GM12878 (cell line): ENCODE measurements at regions of chr11 and their contacts with region 1.

Region 1: GRCh38 chr11:83115551-83115950 is 41.4 kb upstream of the PCF11 start:
- DNase-seq: no peak
- ATAC-seq: no peak
- H3K4me3 ChIP-seq: 0 out of 2 replicates have a peak overlapping the region, but pooled peaks have one; percentile 8
- H3K27ac ChIP-seq: no peak overlapping the region
- H3K4me1 ChIP-seq: peaks cover 12% of the 10 kb centered on the region
- H3K27me3 ChIP-seq: no peaks in the 10 kb centered on the region
- CTCF ChIP-seq: no peak
- EP300 ChIP-seq: no peak
- POLR2A ChIP-seq: no peak
- RAD21 ChIP-seq: no peak

Region 2: GRCh38 chr11:82775736-82776346 is 339.7 kb before region 1 on chr11:
- CTCF ChIA-PET with region 1: no interaction called
- POLR2A ChIA-PET with region 1: no interaction called
- RAD21 ChIA-PET with region 1: no interaction called
- SMC1A ChIA-PET with region 1: no interaction called
- in situ Hi-C with region 1: no loop called
- intact Hi-C with region 1: no loop called
- DNase-seq: no peak
- ATAC-seq: peak; percentile 100
- H3K4me3 ChIP-seq: no peak overlapping the region
- H3K27ac ChIP-seq: no peak overlapping the region
- H3K4me1 ChIP-seq: no peaks in the 10 kb centered on the region
- H3K27me3 ChIP-seq: no peaks in the 10 kb centered on the region
- CTCF ChIP-seq: peak; percentile 76 to 90 (median 85)
- EP300 ChIP-seq: no peak
- POLR2A ChIP-seq: no peak
- RAD21 ChIP-seq: peak; percentile 64

Region 3: DNA sequence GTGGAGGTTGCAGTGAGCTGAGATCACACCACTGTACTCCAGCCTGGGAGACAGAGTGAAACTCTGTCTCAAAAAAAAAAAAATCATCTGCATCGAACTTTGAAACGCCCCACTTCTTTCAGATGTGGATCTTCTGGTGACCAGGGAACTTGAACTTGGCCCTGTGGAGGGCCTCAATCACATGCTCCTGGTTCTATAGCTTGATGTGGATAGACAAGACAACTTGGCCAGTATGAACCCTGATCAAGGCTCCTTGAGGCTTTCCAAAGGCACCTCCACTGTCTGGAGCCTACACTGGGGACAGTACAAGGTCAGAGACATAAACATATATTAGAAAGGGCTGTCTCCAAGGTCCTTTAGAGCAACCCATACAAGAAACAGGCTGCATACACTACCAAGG is 74.4 kb before region 1 on chr11:
- CTCF ChIA-PET with region 1: no interaction called
- POLR2A ChIA-PET with region 1: no interaction called
- RAD21 ChIA-PET with region 1: no interaction called
- SMC1A ChIA-PET with region 1: no interaction called
- in situ Hi-C with region 1: no loop called
- intact Hi-C with region 1: no loop called
- DNase-seq: no peak
- ATAC-seq: no peak
- H3K4me3 ChIP-seq: no peak overlapping the region
- H3K27ac ChIP-seq: no peak overlapping the region
- H3K4me1 ChIP-seq: peaks cover 5% of the 10 kb centered on the region
- H3K27me3 ChIP-seq: no peaks in the 10 kb centered on the region
- CTCF ChIP-seq: no peak
- EP300 ChIP-seq: no peak
- POLR2A ChIP-seq: no peak
- RAD21 ChIP-seq: no peak

Region 4: DNA sequence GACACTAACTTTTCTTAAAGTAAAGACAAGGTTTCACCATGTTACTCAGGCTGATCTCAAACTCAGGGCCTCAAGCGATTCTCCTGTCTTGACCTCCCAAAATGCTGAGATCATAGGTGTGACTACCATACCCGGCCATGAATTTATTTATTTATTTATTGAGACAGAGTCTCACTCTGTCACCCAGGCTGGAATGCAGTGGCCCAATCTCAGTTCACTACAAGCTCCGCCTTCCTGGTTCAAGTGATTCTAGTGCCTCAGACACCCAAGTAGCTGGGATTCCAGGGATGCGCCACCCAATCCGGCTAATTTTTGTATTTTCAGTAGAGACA is 11.7 kb after region 1 on chr11:
- CTCF ChIA-PET with region 1: interaction called, 6 read pairs
- POLR2A ChIA-PET with region 1: interaction called, 3 read pairs
- RAD21 ChIA-PET with region 1: interaction called, 4 read pairs
- SMC1A ChIA-PET with region 1: interaction called, 13 read pairs
- in situ Hi-C with region 1: no loop called
- intact Hi-C with region 1: no loop called
- DNase-seq: no peak
- ATAC-seq: peak; percentile 60; the same call in 1 of the 3 replicates
- H3K4me3 ChIP-seq: no peak overlapping the region
- H3K27ac ChIP-seq: no peak overlapping the region
- H3K4me1 ChIP-seq: peaks cover 8% of the 10 kb centered on the region; the same call in 1 of the 2 replicates
- H3K27me3 ChIP-seq: no peaks in the 10 kb centered on the region
- CTCF ChIP-seq: no peak
- EP300 ChIP-seq: no peak
- POLR2A ChIP-seq: no peak
- RAD21 ChIP-seq: no peak

Region 5: GRCh38 chr11:83278351-83278750 is 162.8 kb after region 1 on chr11:
- CTCF ChIA-PET with region 1: no interaction called
- POLR2A ChIA-PET with region 1: no interaction called
- RAD21 ChIA-PET with region 1: no interaction called
- SMC1A ChIA-PET with region 1: no interaction called
- in situ Hi-C with region 1: no loop called
- intact Hi-C with region 1: no loop called
- DNase-seq: no peak
- ATAC-seq: no peak
- H3K4me3 ChIP-seq: no peak overlapping the region
- H3K27ac ChIP-seq: no peak overlapping the region
- H3K4me1 ChIP-seq: no peaks in the 10 kb centered on the region
- H3K27me3 ChIP-seq: no peaks in the 10 kb centered on the region
- CTCF ChIP-seq: no peak
- EP300 ChIP-seq: no peak
- POLR2A ChIP-seq: no peak
- RAD21 ChIP-seq: no peak